Naive thymus-derived CD4-positive, alpha-beta T cell (primary cell): ENCODE measurements at regions of chr1 and their contacts with region 1.

Region 1: DNA sequence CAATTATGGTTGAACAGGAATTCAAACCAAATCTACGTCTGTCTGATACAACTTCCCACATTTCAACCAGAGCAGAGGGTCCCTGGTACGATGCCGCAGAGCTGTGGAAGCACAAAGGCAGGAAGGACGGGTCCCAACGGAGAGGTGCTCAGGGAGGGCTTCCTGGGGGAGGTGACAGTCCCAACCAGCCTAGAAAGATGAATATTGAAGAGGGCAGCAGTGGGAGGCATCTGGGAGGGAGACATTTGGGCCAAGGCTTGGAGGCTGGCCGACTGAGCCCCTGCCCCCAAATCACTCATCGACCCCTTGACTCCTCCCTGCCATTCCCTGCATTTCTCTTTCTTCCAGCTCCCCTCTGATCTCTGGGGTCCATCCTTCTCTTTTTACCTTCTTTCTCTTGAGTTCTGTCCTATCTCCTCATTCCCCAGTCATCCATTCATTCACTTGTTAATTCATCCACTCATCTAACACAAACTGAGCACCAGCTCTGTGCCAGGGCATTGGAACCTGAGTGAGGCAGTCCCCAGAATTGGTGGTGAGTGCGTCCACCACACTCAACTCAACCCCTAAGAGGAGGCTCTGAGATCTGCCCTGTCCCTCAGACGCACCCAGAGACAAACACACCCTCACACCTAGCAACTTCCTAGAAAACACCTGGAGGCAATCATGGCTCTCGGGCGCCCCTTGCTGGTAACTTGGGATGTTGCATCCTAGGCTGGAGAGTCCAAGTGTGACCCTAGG is 13.2 kb upstream of the CELA3B start:
- DNase-seq: peak; percentile 63 to 89 (median 78)
- ATAC-seq: peak; percentile 95
- H3K4me3 ChIP-seq: no peak overlapping the region
- H3K4me3 Mint-ChIP-seq: peak overlapping the region in 2 of 10 donors; percentile 2 to 11
- H3K27ac ChIP-seq: no peak overlapping the region
- H3K27ac Mint-ChIP-seq: peak overlapping the region; percentile 38 to 94 (median 63)
- H3K4me1 ChIP-seq: no peaks in the 10 kb centered on the region
- H3K4me1 Mint-ChIP-seq: peaks cover 6 to 18% (median 11%) of the 10 kb centered on the region in 7 donors
- H3K27me3 ChIP-seq: no peaks in the 10 kb centered on the region
- H3K27me3 Mint-ChIP-seq: peaks cover 0 to 7% (median 0%) of the 10 kb centered on the region in 5 donors

Region 2: GRCh38 chr1:21232044-21232443 is 731.6 kb before region 1 on chr1:
- CTCF ChIA-PET with region 1: no interaction called
- POLR2A ChIA-PET with region 1: no interaction called
- intact Hi-C with region 1: loop called in 1 of 2 experiments (anchors 10 kb)
- DNase-seq: peak in 6 of 9 donors; percentile 20 to 53 (median 42)
- ATAC-seq: peak; percentile 76
- H3K4me3 ChIP-seq: no peak overlapping the region
- H3K4me3 Mint-ChIP-seq: no peak overlapping the region
- H3K27ac ChIP-seq: no peak overlapping the region
- H3K27ac Mint-ChIP-seq: peak overlapping the region in 2 of 9 donors; percentile 8 to 29
- H3K4me1 ChIP-seq: no peaks in the 10 kb centered on the region
- H3K4me1 Mint-ChIP-seq: no peaks in the 10 kb centered on the region
- H3K27me3 ChIP-seq: no peaks in the 10 kb centered on the region
- H3K27me3 Mint-ChIP-seq: no peaks in the 10 kb centered on the region

Region 3: DNA sequence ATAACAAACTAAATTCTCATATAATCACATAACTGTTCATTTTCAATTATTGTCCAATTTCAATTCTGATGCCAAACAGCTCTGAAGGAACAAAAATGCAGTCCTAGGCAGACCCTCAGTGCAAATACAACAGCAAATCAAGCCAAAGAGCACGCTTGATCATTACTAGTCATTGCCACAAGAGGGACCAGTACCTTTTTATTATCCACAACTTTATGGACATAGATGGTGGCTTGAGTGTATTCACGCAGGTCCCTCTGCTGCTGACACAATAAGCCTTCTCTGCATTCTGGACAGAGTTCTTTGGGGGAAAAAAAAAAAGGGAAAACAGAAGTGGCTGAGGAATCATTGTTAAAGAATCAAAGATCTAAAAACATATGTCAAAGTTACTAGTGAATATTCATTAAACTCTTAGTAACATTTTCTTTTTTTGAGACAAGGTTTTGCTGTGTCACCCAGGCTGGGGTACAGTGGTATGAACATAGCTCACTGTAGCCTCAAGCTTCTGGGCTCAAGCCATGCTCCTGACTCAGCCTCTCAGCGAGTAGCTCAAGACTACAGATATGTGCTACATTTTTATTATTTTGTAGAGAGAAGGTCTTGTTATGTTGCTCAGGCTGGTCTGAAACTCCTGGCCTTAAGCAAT is 260.2 kb before region 1 on chr1:
- CTCF ChIA-PET with region 1: no interaction called
- POLR2A ChIA-PET with region 1: no interaction called
- intact Hi-C with region 1: loop called (anchors 1 to 2 kb)
- DNase-seq: peak in 2 of 9 donors; percentile 5 to 8
- ATAC-seq: peak; percentile 44
- H3K4me3 ChIP-seq: no peak overlapping the region
- H3K4me3 Mint-ChIP-seq: no peak overlapping the region
- H3K27ac ChIP-seq: no peak overlapping the region
- H3K27ac Mint-ChIP-seq: peak overlapping the region in 1 of 9 donors; percentile 4
- H3K4me1 ChIP-seq: no peaks in the 10 kb centered on the region
- H3K4me1 Mint-ChIP-seq: peaks cover 0 to 24% (median 0%) of the 10 kb centered on the region in 7 donors
- H3K27me3 ChIP-seq: no peaks in the 10 kb centered on the region
- H3K27me3 Mint-ChIP-seq: no peaks in the 10 kb centered on the region

Region 4: GRCh38 chr1:21742578-21742977 is 221.1 kb before region 1 on chr1:
- CTCF ChIA-PET with region 1: interaction called, 4 read pairs
- POLR2A ChIA-PET with region 1: no interaction called
- intact Hi-C with region 1: loop called in 1 of 2 experiments (anchors 2 kb)
- DNase-seq: no peak
- ATAC-seq: no peak
- H3K4me3 ChIP-seq: no peak overlapping the region
- H3K4me3 Mint-ChIP-seq: no peak overlapping the region
- H3K27ac ChIP-seq: no peak overlapping the region
- H3K27ac Mint-ChIP-seq: peak overlapping the region in 1 of 9 donors; percentile 3
- H3K4me1 ChIP-seq: no peaks in the 10 kb centered on the region
- H3K4me1 Mint-ChIP-seq: peaks cover 16 to 24% (median 20%) of the 10 kb centered on the region in 7 donors
- H3K27me3 ChIP-seq: no peaks in the 10 kb centered on the region
- H3K27me3 Mint-ChIP-seq: no peaks in the 10 kb centered on the region

Region 5: DNA sequence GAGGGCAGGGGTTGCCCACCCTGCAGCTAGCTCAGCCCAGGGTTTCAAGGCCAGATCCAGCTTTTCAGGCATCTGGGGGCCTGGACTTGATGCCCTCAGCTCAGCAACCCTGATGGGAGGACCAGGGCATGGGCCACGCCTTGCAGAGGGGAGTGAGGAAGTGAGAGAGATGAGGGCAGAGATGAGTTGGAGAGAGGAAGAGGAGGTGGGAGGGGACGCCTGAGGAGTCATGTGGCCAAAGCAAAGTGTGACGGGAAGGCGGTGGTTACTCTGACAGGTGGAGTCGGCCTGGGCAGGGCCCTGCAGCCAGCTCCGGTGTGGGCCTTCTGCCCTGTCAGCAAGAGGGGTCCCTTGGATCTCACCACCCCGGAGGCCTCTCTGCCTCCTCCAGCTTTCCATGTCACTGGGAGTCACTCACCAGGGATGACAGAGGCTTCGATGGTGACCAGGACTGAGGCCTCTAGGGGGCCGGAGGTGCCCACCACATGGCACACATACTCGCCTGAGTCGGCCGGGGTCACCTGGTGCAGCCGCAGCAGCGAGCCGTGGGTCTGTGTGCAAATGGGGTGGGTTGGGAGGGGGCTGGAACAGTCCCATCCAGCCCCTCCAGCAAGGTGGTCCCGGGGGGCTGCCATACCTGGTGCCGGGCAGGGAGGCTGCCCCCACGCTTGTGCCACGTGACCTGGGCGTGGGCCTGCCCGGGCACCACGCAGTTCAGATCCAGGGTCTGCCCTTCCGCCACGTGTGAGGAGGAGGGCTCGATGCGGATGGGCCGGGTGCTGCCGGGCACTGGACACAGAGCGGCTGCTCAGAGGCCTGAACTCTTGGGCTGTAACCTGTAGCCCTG is 111.1 kb before region 1 on chr1:
- CTCF ChIA-PET with region 1: no interaction called
- POLR2A ChIA-PET with region 1: no interaction called
- intact Hi-C with region 1: no loop called
- DNase-seq: no peak
- ATAC-seq: peak; percentile 49
- H3K4me3 ChIP-seq: no peak overlapping the region
- H3K4me3 Mint-ChIP-seq: no peak overlapping the region
- H3K27ac ChIP-seq: no peak overlapping the region
- H3K27ac Mint-ChIP-seq: peak overlapping the region in 1 of 9 donors; percentile 32
- H3K4me1 ChIP-seq: no peaks in the 10 kb centered on the region
- H3K4me1 Mint-ChIP-seq: peaks cover 0 to 6% (median 0%) of the 10 kb centered on the region in 7 donors
- H3K27me3 ChIP-seq: no peaks in the 10 kb centered on the region
- H3K27me3 Mint-ChIP-seq: no peaks in the 10 kb centered on the region

Region 6: DNA sequence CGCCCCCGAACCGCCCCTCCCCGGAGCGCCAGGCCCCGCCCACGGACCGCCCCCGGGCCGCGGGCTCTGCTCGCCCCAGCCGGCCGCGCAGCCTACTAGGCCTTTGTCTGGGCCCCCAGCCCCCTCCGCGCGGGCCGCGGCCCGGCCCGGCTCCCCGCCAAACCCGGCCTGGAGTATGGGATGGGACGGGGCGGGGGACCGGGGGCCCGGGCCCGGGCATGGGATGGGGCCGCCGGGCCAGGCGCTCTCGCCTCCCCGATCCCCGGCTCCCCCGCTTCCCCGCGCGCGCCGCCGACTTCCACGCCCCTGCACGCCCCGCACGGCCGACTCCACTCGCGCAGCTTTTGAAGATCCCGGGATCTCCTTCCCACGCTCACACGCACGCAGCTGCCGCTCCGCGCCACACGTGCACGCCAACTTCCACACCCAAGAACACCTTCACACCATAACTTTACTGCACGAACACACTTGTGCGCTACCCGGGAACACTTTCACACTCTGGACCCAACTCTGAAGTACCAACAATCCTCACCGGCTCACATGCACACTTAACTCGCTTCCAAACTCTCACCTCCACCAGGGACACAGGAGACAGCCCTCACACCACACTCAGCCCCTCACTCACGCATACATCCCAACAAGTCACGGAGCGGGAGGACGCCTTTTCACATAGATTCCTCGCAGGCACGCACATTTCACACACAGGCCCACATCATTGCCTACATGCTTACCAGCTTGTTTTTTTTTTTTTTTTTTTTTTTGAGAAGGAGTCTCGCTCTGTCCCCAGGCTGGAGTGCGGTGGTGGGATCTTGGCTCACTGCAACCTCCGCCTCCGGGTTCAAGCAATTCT is 26.1 kb before region 1 on chr1:
- CTCF ChIA-PET with region 1: interaction called, 4 read pairs
- POLR2A ChIA-PET with region 1: interaction called, 9 read pairs
- intact Hi-C with region 1: loop called in 1 of 2 experiments (anchors 2 kb)
- DNase-seq: peak; percentile 49 to 79 (median 61)
- ATAC-seq: peak; percentile 96
- H3K4me3 ChIP-seq: peak overlapping the region; percentile 47
- H3K4me3 Mint-ChIP-seq: peak overlapping the region; percentile 81 to 97 (median 92)
- H3K27ac ChIP-seq: peak overlapping the region; percentile 60
- H3K27ac Mint-ChIP-seq: peak overlapping the region; percentile 46 to 95 (median 85)
- H3K4me1 ChIP-seq: peaks cover 0 to 25% of the 10 kb centered on the region in 2 donors
- H3K4me1 Mint-ChIP-seq: peaks cover 13 to 42% (median 23%) of the 10 kb centered on the region in 7 donors
- H3K27me3 ChIP-seq: no peaks in the 10 kb centered on the region
- H3K27me3 Mint-ChIP-seq: peaks cover 0 to 44% (median 0%) of the 10 kb centered on the region in 5 donors